ENCODE measurements at regions of chr6 and their contacts with region 1.

Region 1: GRCh38 chr6:125598422-125598821 is 151.0 kb upstream of the HEY2 start:
- DNase-seq: peak; percentile 28 to 39
- ATAC-seq: peak; percentile 46 to 94 (median 80)
- H3K4me3 ChIP-seq: no peak overlapping the region
- H3K27ac ChIP-seq: peak overlapping the region in 7 of 10 donors; percentile 37 to 80 (median 54)
- H3K4me1 ChIP-seq: peaks cover 0 to 20% (median 7%) of the 10 kb centered on the region in 9 donors
- H3K27me3 ChIP-seq: no peaks in the 10 kb centered on the region
- CTCF ChIP-seq: no peak

Region 2: GRCh38 chr6:125570526-125570925 is 27.9 kb before region 1 on chr6:
- intact Hi-C with region 1: loop called in 1 of 10 experiments (anchors 1 kb)
- DNase-seq: no peak
- ATAC-seq: peak in 2 of 8 donors; percentile 12 to 29
- H3K4me3 ChIP-seq: no peak overlapping the region
- H3K27ac ChIP-seq: no peak overlapping the region
- H3K4me1 ChIP-seq: no peaks in the 10 kb centered on the region
- H3K27me3 ChIP-seq: peaks cover 0 to 3% (median 0%) of the 10 kb centered on the region in 7 donors
- CTCF ChIP-seq: no peak